ENCODE measurements at regions of chr10 and their contacts with region 1.

Region 1: DNA sequence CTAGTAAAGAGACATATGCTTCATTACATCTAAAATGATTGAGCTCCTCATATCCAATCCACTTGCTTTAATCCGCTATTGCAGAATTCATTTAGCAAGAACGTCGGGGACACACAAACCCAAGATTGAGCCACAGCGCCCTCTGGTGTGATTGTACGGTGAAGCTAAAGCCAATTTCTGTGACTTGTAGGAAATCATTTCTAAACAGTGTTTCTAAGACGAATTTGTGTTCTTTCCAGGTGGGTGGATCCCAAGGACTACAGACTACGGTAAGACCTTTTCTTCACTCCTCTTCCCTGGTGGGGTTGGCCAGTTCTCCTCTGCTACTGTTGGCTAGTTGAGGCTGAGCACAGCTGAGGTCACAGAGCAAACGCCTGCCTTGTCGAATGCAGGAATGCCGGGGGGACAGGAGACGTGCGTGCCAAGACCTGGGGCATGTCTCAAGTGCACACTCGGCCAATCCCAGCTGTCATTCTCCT is 5.2 kb downstream of the DMBT1 start:
- DNase-seq: peak; percentile 79
- ATAC-seq: peak; percentile 87
- H3K4me3 ChIP-seq: no peak overlapping the region
- H3K27ac ChIP-seq: no peak overlapping the region
- H3K4me1 ChIP-seq: no peaks in the 10 kb centered on the region
- H3K27me3 ChIP-seq: peaks cover 18% of the 10 kb centered on the region
- CTCF ChIP-seq: peak; percentile 91
- POLR2A ChIP-seq: 0 out of 2 replicates have a peak, but pooled peaks have one; percentile 45
- RAD21 ChIP-seq: peak; percentile 91

Region 2: GRCh38 chr10:122051251-122051996 is 514.3 kb before region 1 on chr10:
- CTCF ChIA-PET with region 1: no interaction called
- POLR2A ChIA-PET with region 1: no interaction called
- dilution Hi-C with region 1: no loop called
- in situ Hi-C with region 1: no loop called
- intact Hi-C with region 1: loop called (anchors 10 kb)
- DNase-seq: peak; percentile 65
- ATAC-seq: peak; percentile 81
- H3K4me3 ChIP-seq: no peak overlapping the region
- H3K27ac ChIP-seq: no peak overlapping the region
- H3K4me1 ChIP-seq: no peaks in the 10 kb centered on the region
- H3K27me3 ChIP-seq: 0 out of 2 replicates have a peak, but pooled peaks cover 3% of the 10 kb centered on the region
- CTCF ChIP-seq: peak; percentile 84
- POLR2A ChIP-seq: no peak
- RAD21 ChIP-seq: peak; percentile 38

Region 3: DNA sequence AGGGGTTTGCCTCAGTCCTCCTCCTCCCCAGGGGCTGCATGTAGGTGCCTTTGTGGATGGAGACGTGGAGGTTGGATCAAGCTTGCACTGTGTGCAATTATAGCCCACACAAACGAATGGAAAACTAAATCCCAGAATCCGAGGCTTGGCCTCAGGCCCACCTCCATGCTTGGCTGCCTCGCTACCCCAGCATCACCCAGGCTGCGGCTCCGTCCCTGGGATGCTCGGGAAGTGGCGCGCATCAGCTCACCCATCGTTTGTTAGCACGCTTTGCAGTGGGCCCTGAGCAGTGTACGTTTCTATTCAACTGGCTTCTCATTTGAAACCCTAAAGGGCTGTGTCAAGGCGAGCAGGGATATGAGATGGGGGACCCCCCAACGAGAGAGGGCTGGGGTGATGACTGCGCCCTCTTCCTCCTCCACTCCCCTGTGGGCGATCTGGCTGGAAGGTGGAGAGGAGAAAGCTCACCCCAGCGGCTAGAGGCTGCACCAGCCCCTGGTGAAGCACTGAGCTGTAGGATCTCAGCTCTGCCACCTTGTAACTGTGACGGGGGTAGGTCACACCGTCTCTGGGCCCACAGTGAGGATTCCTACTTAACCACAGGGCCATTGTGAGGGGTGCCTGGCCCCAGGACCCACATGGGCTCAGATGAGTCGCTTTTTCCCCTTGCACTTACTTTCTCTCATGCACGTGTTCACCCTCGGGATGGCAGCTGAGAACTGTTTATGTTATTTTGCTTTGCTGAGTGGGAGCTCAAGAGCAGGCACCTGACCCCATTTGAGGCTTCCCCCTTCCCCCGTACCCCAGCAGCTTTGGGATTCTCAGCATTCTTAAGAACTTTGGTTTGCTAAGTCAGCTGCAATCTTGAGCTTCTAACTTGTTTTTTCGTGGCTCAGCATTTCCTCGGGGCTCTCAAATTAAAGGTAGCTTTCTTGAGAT is 307.4 kb before region 1 on chr10:
- CTCF ChIA-PET with region 1: no interaction called
- POLR2A ChIA-PET with region 1: no interaction called
- dilution Hi-C with region 1: no loop called
- in situ Hi-C with region 1: no loop called
- intact Hi-C with region 1: no loop called
- DNase-seq: peak; percentile 69
- ATAC-seq: peak; percentile 72
- H3K4me3 ChIP-seq: no peak overlapping the region
- H3K27ac ChIP-seq: no peak overlapping the region
- H3K4me1 ChIP-seq: peaks cover 6% of the 10 kb centered on the region; the same call in 1 of the 2 replicates
- H3K27me3 ChIP-seq: no peaks in the 10 kb centered on the region
- CTCF ChIP-seq: no peak
- POLR2A ChIP-seq: no peak
- RAD21 ChIP-seq: no peak

Region 4: GRCh38 chr10:122342293-122343134 is 223.3 kb before region 1 on chr10:
- CTCF ChIA-PET with region 1: interaction called, 6 read pairs
- POLR2A ChIA-PET with region 1: no interaction called
- dilution Hi-C with region 1: no loop called
- in situ Hi-C with region 1: loop called (anchors 10 kb)
- intact Hi-C with region 1: loop called (anchors 1 kb)
- DNase-seq: peak; percentile 51
- ATAC-seq: peak; percentile 89
- H3K4me3 ChIP-seq: no peak overlapping the region
- H3K27ac ChIP-seq: no peak overlapping the region
- H3K4me1 ChIP-seq: no peaks in the 10 kb centered on the region
- H3K27me3 ChIP-seq: peaks cover 10% of the 10 kb centered on the region; the same call in 1 of the 2 replicates
- CTCF ChIP-seq: peak; percentile 83
- POLR2A ChIP-seq: no peak
- RAD21 ChIP-seq: peak; percentile 74

Region 5: DNA sequence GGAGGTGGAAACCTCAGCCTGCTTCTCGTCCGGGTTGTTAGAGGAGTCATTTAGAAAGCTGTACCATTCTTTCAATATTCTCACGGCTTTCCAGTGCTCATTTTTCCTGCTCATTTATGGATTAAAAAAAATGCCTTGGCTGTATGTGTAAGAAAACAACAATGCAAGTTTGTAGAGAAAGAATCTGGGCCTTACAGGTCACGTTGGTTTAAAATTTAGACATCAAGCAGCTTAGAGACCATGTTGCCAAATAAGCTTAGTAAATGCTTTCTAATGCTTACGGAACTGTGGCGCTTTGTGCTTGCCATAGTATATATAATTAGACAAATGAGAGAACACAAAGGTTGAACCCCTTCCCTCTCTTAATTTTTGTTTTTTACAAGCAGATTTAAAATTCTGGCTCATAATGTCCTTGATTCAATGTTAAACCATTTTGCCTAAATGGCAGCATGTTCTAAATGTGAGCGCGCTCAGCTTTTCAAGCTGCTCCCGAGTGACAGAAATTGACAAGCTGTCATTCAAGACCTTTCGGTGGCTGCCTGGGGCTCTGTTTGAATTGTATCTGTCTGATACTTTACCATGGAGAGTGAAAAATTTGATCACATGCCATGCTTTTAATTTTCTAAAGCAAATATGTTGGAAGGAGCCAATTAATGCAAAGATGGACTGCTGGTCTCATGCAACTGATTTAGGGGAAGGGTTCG is 110.2 kb before region 1 on chr10:
- CTCF ChIA-PET with region 1: interaction called, 14 read pairs
- POLR2A ChIA-PET with region 1: no interaction called
- dilution Hi-C with region 1: no loop called
- in situ Hi-C with region 1: loop called (anchors 10 kb)
- intact Hi-C with region 1: no loop called
- DNase-seq: no peak
- ATAC-seq: no peak
- H3K4me3 ChIP-seq: no peak overlapping the region
- H3K27ac ChIP-seq: no peak overlapping the region
- H3K4me1 ChIP-seq: peaks cover 6% of the 10 kb centered on the region
- H3K27me3 ChIP-seq: peaks cover 2% of the 10 kb centered on the region
- CTCF ChIP-seq: no peak
- POLR2A ChIP-seq: no peak
- RAD21 ChIP-seq: no peak

Region 6: DNA sequence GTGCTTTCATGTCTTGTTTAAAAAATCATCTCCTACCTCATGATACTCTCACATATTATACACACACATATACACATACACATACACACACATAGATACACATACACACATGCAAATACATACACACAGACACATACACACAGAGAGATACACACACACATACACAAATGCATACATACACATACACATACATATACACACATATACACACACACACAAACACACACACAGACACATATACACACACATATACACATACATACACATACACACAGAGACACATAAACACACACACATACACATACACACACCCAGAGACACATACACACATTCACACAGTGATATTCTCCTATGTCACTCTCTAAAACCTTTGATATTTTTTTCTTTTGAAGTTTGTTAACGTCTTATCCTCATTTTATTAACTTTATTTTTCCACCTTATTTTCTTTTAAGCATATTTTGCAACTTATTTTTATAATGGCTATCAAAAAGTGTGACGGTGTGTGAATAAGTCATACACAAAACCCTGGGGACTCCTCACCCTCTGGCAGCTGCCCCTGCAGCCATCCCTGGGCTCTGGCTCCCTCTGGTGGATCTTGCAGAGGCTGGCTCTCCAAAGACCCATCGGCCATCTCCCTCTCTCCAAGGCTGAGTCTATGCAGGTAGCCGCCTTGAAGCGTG is 137.8 kb after region 1 on chr10:
- CTCF ChIA-PET with region 1: no interaction called
- POLR2A ChIA-PET with region 1: no interaction called
- dilution Hi-C with region 1: no loop called
- in situ Hi-C with region 1: no loop called
- intact Hi-C with region 1: loop called (anchors 10 kb)
- DNase-seq: peak; percentile 35
- ATAC-seq: peak; percentile 94
- H3K4me3 ChIP-seq: no peak overlapping the region
- H3K27ac ChIP-seq: no peak overlapping the region
- H3K4me1 ChIP-seq: no peaks in the 10 kb centered on the region
- H3K27me3 ChIP-seq: no peaks in the 10 kb centered on the region
- CTCF ChIP-seq: peak; percentile 70
- POLR2A ChIP-seq: no peak
- RAD21 ChIP-seq: peak; percentile 79